ENCODE measurements at regions of chr11 and their contacts with region 1.

Region 1: GRCh38 chr11:60145677-60146076 is 37.2 kb downstream of the MS4A6A start:
- DNase-seq: no peak
- ATAC-seq: no peak
- H3K4me3 ChIP-seq: no peak overlapping the region
- H3K27ac ChIP-seq: no peak overlapping the region
- H3K4me1 ChIP-seq: no peaks in the 10 kb centered on the region
- H3K27me3 ChIP-seq: no peaks in the 10 kb centered on the region
- CTCF ChIP-seq: no peak

Region 2: DNA sequence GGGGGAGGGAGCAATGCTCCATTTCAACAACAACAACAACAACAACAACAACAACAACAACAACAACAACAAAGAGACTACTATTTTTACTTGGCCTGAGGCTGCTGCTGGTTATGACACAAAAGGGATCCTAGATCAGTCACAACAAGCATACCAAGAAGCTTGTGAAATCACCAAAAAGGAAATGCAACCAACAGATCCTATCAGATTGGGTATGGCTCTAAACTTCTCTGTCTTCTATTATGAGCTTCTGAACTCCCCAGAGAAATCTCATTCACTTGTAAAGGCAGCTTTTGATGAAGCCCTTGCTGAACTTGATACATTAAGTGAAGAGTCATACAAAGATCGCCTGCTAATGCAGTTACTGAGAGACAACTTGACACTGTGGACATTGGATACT is 67.7 kb before region 1 on chr11:
- intact Hi-C with region 1: no loop called
- DNase-seq: no peak
- ATAC-seq: no peak
- H3K4me3 ChIP-seq: no peak overlapping the region
- H3K27ac ChIP-seq: no peak overlapping the region
- H3K4me1 ChIP-seq: no peaks in the 10 kb centered on the region
- H3K27me3 ChIP-seq: no peaks in the 10 kb centered on the region
- CTCF ChIP-seq: no peak

Region 3: DNA sequence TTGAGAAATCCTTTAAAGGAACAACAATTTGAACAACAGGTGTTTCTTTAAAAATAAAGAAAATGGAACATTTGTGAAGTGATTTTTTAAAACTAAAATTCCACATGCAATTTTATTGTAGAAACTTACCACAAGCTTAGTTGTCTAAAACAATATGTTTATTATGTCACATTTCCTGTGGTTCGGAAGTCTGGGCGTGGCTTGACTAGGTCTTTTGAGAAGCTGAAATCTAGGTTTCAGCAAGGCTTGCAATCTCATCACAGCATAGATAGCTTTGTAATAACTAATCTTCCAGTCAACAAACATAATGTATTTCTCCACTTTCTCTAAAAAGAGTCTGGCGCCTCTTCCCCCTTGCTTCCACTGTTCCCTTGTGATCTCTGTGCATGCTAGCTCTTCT is 10.3 kb after region 1 on chr11:
- intact Hi-C with region 1: loop called in 1 of 10 experiments (anchors 1 kb)
- DNase-seq: no peak
- ATAC-seq: peak in 1 of 8 donors; percentile 56
- H3K4me3 ChIP-seq: no peak overlapping the region
- H3K27ac ChIP-seq: peak overlapping the region in 6 of 10 donors; percentile 5 to 60 (median 26)
- H3K4me1 ChIP-seq: peaks cover 0 to 22% (median 8%) of the 10 kb centered on the region in 9 donors
- H3K27me3 ChIP-seq: no peaks in the 10 kb centered on the region
- CTCF ChIP-seq: no peak

Region 4: DNA sequence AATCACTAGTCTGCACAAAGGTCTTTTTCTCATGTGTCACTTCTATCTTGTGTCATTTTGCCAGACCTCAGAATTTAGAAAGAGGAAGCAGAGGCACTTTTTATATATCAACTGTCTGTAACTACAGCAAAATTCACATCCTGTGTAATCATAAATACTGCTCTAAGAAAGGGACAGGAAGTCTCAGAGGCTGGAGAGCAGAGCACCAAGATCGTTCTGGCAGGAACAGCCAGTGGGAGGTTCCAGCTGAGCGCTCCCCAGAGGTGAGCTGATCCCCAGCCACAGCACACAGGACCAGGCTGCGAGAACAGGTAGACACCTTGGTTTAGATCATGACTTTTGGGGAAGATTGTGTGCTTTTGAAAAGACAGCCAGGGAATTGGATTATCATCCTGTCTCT is 232.7 kb after region 1 on chr11 and contains the start of gene MS4A7:
- intact Hi-C with region 1: no loop called
- DNase-seq: peak; percentile 12 to 20
- ATAC-seq: peak; percentile 54 to 81 (median 76)
- H3K4me3 ChIP-seq: peak within 1 kb of the TSS in 5 of 10 donors; percentile 34 to 58 (median 36)
- H3K27ac ChIP-seq: peak within 1 kb of the TSS in 7 of 10 donors; percentile 9 to 92 (median 46)
- H3K4me1 ChIP-seq: peaks cover 0 to 10% (median 0%) of the 10 kb centered on the region in 9 donors
- H3K27me3 ChIP-seq: peaks cover 0 to 9% (median 0%) of the 10 kb centered on the region in 7 donors
- CTCF ChIP-seq: no peak
- total RNA-seq, gene MS4A7: 3.6 to 23.9 (median 7.6) TPM

Measured in heart right ventricle (tissue), 16 donors.